ENCODE measurements at regions of chr17 and their contacts with region 1.

Region 1: DNA sequence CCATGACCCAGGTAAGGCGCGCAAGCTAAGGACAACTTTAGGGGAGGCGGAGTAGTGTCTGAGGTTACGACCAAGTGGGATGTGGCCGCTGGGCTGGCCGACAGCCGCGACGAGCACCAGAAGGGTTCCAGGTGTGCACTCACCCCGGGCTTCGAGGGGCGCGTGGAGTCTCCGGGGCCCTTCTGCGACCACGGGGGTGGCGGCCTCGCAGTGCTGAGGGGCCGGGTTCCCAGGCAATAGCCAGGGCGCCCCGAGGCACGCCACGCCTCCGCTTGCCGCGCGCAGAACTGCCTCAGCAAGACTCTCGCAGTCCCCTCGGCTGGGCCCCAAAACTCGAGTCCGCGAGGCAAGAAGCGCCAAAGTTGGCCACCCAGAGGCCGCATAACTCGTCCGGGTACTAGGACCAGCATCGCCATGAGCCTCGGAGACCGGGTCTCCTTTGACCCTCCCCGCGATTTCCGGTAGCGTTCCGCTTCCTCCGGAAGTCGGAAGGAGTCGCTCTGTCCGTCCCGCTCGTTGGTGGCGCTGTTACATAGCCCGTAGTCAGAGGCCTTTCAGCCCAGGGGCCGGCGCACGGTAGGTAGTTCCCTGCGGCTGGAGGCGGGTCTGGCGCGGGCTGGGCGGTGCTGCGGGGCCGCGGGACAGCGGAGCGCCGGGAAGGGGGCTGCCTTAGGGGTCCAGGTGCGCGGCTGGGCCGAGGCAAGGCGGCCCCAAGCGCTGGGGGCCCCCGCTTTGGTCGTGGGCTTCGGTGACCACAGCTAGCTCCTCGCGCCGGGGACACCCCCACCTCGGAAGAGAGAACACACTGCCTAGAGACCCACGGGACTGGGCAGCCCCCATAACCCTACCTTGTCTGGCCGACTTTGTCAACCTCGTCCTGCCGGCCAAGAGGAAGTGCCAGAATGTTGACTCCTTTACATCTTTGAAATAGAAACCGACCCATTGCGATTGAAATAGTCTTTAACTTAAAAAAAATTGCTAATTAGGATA is at the starts of genes ADPRM and SCO1:
- DNase-seq: peak; percentile 94
- ATAC-seq: peak; percentile 95
- H3K4me3 Mint-ChIP-seq: peak within 1 kb of the TSS; percentile 91
- H3K27ac Mint-ChIP-seq: peak within 1 kb of the TSS; percentile 95
- H3K4me1 Mint-ChIP-seq: peaks cover 56% of the 10 kb centered on the region
- H3K27me3 Mint-ChIP-seq: no peaks in the 10 kb centered on the region
- total RNA-seq, gene ADPRM: 11.2 to 12.8 TPM
- total RNA-seq, gene SCO1: 39.7 to 42.3 TPM

Region 2: GRCh38 chr17:9575381-9576101 is 1121.8 kb before region 1 on chr17 and contains the start of gene STX8:
- CTCF ChIA-PET with region 1: no interaction called
- POLR2A ChIA-PET with region 1: no interaction called
- intact Hi-C with region 1: loop called in 1 of 2 experiments (anchors 5 kb)
- DNase-seq: peak; percentile 91
- ATAC-seq: peak; percentile 64
- H3K4me3 Mint-ChIP-seq: peak within 1 kb of the TSS; percentile 92
- H3K27ac Mint-ChIP-seq: peak within 1 kb of the TSS; percentile 77
- H3K4me1 Mint-ChIP-seq: peaks cover 15% of the 10 kb centered on the region
- H3K27me3 Mint-ChIP-seq: no peaks in the 10 kb centered on the region
- total RNA-seq, gene STX8: 65.7 to 87.7 TPM

Region 3: GRCh38 chr17:10661437-10661836 is 36.0 kb before region 1 on chr17:
- CTCF ChIA-PET with region 1: no interaction called
- POLR2A ChIA-PET with region 1: no interaction called
- intact Hi-C with region 1: no loop called
- DNase-seq: no peak
- ATAC-seq: no peak
- H3K4me3 Mint-ChIP-seq: no peak overlapping the region
- H3K27ac Mint-ChIP-seq: no peak overlapping the region
- H3K4me1 Mint-ChIP-seq: no peaks in the 10 kb centered on the region
- H3K27me3 Mint-ChIP-seq: no peaks in the 10 kb centered on the region

Region 4: GRCh38 chr17:10683853-10684252 is 13.5 kb before region 1 on chr17:
- CTCF ChIA-PET with region 1: interaction called, 15 read pairs
- POLR2A ChIA-PET with region 1: interaction called, 3 read pairs
- intact Hi-C with region 1: no loop called
- DNase-seq: no peak
- ATAC-seq: no peak
- H3K4me3 Mint-ChIP-seq: no peak overlapping the region
- H3K27ac Mint-ChIP-seq: no peak overlapping the region
- H3K4me1 Mint-ChIP-seq: peaks cover 6% of the 10 kb centered on the region
- H3K27me3 Mint-ChIP-seq: no peaks in the 10 kb centered on the region

Region 5: GRCh38 chr17:10729334-10730193 is 32.2 kb after region 1 on chr17 and contains the start of gene TMEM220:
- CTCF ChIA-PET with region 1: no interaction called
- POLR2A ChIA-PET with region 1: no interaction called
- intact Hi-C with region 1: loop called (anchors 1 kb)
- DNase-seq: peak; percentile 57
- ATAC-seq: peak; percentile 63
- H3K4me3 Mint-ChIP-seq: peak within 1 kb of the TSS; percentile 80
- H3K27ac Mint-ChIP-seq: peak within 1 kb of the TSS; percentile 78
- H3K4me1 Mint-ChIP-seq: peaks cover 28% of the 10 kb centered on the region
- H3K27me3 Mint-ChIP-seq: no peaks in the 10 kb centered on the region
- total RNA-seq, gene TMEM220: 1.1 to 2.1 TPM

Region 6: DNA sequence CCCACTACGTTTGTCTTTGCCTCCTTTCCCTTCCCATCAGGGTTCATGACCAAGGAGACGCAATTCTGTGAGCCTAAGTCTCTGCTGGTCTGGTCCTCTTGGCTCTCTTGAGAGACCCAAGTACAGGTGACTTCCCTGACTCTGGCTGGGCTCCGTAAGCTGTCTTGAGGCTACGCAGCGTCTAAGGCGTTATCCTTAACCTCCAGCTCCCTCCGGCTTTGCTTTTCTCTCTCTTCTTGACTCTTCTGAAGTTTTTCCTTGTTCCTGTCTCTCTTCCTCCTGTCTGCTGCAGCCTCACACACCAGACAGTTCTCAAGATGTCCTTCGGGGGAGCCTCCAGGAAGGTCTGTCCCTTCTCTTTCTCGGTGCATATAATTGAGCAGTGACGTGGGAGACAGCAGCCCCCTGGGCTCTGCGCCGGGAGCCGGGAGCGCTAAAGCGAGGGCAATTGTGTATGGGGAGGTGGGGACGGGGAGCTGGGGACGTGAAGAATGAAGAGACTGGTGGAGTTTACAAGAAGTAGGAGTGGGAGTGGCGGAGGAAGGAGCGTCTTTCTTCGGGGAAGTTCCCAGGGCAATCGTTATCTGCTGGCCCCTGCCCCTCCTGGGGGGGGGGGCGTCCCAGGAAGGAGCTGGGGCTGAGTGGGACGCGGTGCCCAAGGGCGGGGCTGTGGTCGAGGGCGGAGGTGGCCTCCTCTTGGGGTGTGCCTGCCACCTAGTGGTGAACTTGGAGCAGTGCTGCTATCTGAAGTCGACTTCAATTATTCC is 147.4 kb after region 1 on chr17:
- CTCF ChIA-PET with region 1: interaction called, 3 read pairs
- POLR2A ChIA-PET with region 1: no interaction called
- intact Hi-C with region 1: loop called in 1 of 2 experiments (anchors 1 kb)
- DNase-seq: peak; percentile 86
- ATAC-seq: peak; percentile 94
- H3K4me3 Mint-ChIP-seq: peak overlapping the region; percentile 67
- H3K27ac Mint-ChIP-seq: peak overlapping the region; percentile 1
- H3K4me1 Mint-ChIP-seq: peaks cover 10% of the 10 kb centered on the region
- H3K27me3 Mint-ChIP-seq: no peaks in the 10 kb centered on the region

Region 7: GRCh38 chr17:10993126-10993525 is 295.7 kb after region 1 on chr17:
- CTCF ChIA-PET with region 1: no interaction called
- POLR2A ChIA-PET with region 1: no interaction called
- intact Hi-C with region 1: no loop called
- DNase-seq: no peak
- ATAC-seq: no peak
- H3K4me3 Mint-ChIP-seq: no peak overlapping the region
- H3K27ac Mint-ChIP-seq: no peak overlapping the region
- H3K4me1 Mint-ChIP-seq: no peaks in the 10 kb centered on the region
- H3K27me3 Mint-ChIP-seq: peaks cover 12% of the 10 kb centered on the region

Region 8: DNA sequence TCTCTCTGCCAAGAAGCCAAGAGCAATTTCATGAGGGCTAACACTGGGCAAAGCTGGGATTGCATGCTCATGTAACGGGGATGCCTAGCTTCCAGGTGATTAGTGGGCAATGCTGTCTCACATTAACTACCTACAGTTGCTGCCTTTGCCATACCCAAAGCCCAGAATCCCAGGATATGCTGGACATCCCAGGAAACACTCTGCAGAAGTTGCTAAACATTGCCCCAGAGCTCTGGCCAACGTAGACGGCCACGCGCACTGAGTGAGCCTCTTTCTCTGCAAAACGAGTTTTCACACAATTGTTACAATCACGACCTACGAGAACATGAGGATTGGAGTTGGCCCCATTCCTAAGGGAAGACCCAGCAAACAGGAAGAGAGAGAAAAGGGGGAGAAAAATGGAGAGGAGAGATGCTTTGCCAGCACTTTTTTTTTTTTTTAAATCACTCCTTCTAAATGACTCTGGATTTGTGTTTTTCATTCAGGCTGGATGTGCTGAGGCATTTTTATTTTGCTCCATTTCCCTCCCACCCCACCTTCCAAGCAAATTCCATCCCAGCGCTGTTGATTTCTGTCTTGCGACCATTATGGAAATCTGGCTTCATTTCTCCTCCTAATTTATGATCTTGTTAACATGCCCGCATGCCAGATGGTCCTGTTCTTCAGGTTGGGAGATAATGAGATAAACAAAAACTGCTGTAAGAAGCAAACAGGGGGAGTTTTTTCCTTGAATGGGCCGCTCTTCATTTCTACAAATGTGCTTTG is 788.1 kb after region 1 on chr17:
- CTCF ChIA-PET with region 1: no interaction called
- POLR2A ChIA-PET with region 1: no interaction called
- intact Hi-C with region 1: no loop called
- DNase-seq: no peak
- ATAC-seq: no peak
- H3K4me3 Mint-ChIP-seq: no peak overlapping the region
- H3K27ac Mint-ChIP-seq: no peak overlapping the region
- H3K4me1 Mint-ChIP-seq: no peaks in the 10 kb centered on the region
- H3K27me3 Mint-ChIP-seq: no peaks in the 10 kb centered on the region

Region 9: GRCh38 chr17:11997147-11997846 is 1299.9 kb after region 1 on chr17 and contains the start of gene ZNF18:
- CTCF ChIA-PET with region 1: no interaction called
- POLR2A ChIA-PET with region 1: no interaction called
- intact Hi-C with region 1: loop called in 1 of 2 experiments (anchors 5 kb)
- DNase-seq: peak; percentile 98
- ATAC-seq: peak; percentile 99
- H3K4me3 Mint-ChIP-seq: peak within 1 kb of the TSS; percentile 78
- H3K27ac Mint-ChIP-seq: peak within 1 kb of the TSS; percentile 86
- H3K4me1 Mint-ChIP-seq: peaks cover 15% of the 10 kb centered on the region
- H3K27me3 Mint-ChIP-seq: no peaks in the 10 kb centered on the region
- total RNA-seq, gene ZNF18: 7.3 to 7.4 TPM

Region 10: GRCh38 chr17:12020642-12021622 is 1323.5 kb after region 1 on chr17 and contains the start of gene MAP2K4:
- CTCF ChIA-PET with region 1: no interaction called
- POLR2A ChIA-PET with region 1: no interaction called
- intact Hi-C with region 1: loop called in 1 of 2 experiments (anchors 5 kb)
- DNase-seq: peak; percentile 96
- ATAC-seq: peak; percentile 94
- H3K4me3 Mint-ChIP-seq: peak within 1 kb of the TSS; percentile 73
- H3K27ac Mint-ChIP-seq: peak within 1 kb of the TSS; percentile 58
- H3K4me1 Mint-ChIP-seq: peaks cover 52% of the 10 kb centered on the region
- H3K27me3 Mint-ChIP-seq: peaks cover 2% of the 10 kb centered on the region
- total RNA-seq, gene MAP2K4: 30.1 to 36.2 TPM